CD14-positive monocyte (primary cell): ENCODE measurements at regions of chr20 and their contacts with region 1.

Region 1: DNA sequence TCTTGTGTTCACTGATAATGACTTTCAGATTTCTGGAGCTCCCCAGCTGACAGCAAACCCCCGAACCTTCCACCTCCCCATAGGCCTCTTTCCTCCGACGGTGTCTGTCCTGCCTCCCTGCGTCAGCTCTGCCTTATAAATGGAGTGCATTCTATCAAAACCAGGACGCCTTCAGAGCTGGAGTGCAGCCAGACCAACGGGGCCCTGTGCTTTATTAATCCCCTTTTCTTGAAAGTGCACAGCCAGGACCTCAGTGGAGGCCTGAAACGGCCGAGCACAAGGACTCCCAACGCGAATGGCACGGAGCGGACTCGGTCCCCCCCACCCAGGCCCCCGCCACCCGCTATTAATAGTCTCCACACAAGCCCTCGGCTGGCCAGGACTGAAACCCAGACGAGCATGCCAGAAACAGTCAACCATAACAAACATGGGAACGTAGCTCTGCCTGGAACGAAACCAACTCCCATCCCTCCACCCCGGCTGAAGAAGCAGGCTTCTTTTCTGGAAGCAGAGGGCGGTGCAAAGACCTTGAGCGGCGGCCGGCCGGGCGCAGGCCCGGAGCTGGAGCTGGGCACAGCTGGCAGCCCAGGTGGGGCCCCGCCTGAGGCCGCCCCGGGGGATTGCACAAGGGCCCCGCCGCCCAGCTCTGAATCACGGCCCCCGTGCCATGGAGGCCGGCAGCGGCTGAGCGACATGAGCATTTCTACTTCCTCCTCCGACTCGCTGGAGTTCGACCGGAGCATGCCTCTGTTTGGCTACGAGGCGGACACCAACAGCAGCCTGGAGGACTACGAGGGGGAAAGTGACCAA is 42.3 kb upstream of the NAA20 start:
- DNase-seq: peak; percentile 89 to 94 (median 93)
- H3K4me3 ChIP-seq: peak overlapping the region; percentile 14 to 69 (median 55)
- H3K4me3 Mint-ChIP-seq: peak overlapping the region; percentile 76 to 83
- H3K27ac ChIP-seq: peak overlapping the region; percentile 85 to 89
- H3K27ac Mint-ChIP-seq: peak overlapping the region; percentile 86 to 97 (median 94)
- H3K4me1 ChIP-seq: peaks cover 84 to 93% of the 10 kb centered on the region in 2 donors
- H3K4me1 Mint-ChIP-seq: peaks cover 93% of the 10 kb centered on the region
- H3K27me3 ChIP-seq: no peaks in the 10 kb centered on the region
- H3K27me3 Mint-ChIP-seq: peaks cover 0 to 1% (median under 1%) of the 10 kb centered on the region in 3 donors
- CTCF ChIP-seq: no peak

Region 2: DNA sequence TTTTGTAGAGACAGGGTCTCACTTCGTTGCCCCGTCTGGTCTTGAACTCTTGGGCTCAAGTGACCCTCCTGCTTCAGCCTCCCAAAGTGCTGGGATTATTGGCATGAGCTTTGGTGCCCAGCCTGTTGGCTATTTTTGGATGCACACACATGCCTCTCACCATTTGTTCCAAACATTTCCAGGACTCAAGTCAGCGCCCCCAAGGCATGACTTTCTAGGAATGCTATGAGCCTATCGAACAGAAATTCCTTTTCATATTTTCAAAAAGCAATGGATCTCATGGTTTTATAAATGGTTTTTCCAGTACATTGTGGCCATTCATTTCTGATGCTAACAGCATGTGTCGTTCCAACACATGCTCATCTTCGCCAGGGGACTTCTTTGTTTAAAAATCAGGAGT is 76.9 kb before region 1 on chr20:
- intact Hi-C with region 1: no loop called
- DNase-seq: no peak
- H3K4me3 ChIP-seq: no peak overlapping the region
- H3K4me3 Mint-ChIP-seq: no peak overlapping the region
- H3K27ac ChIP-seq: no peak overlapping the region
- H3K27ac Mint-ChIP-seq: no peak overlapping the region
- H3K4me1 ChIP-seq: peaks cover 16 to 17% of the 10 kb centered on the region in 2 donors
- H3K4me1 Mint-ChIP-seq: peaks cover 17% of the 10 kb centered on the region
- H3K27me3 ChIP-seq: no peaks in the 10 kb centered on the region
- H3K27me3 Mint-ChIP-seq: peaks cover 0 to 5% (median 0%) of the 10 kb centered on the region in 3 donors
- CTCF ChIP-seq: no peak

Region 3: DNA sequence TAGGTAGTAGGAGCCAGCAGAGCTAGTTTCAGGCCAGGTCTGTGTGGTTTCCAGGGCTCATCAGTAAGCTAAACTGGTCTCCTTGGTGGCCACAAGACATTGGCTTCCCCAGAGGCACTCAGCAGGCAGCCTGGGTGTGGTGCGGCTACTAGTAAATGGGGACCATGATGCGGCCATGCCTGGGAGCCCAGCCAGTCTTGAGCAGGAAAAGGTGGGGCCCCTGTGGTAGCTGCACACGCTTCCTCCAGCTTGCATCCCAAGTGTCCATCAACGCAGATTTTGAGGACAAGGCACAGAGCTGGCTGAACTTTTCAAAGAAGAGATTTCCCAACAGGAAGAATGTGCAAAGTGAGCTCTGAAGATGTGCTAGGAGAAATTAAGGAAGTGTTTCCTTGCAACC is 65.1 kb before region 1 on chr20:
- intact Hi-C with region 1: loop called in 1 of 2 experiments (anchors 5 kb)
- DNase-seq: peak in 2 of 3 donors; percentile 57 to 61
- H3K4me3 ChIP-seq: peak overlapping the region in 1 of 3 experiments; percentile 42
- H3K4me3 Mint-ChIP-seq: peak overlapping the region; percentile 34 to 67
- H3K27ac ChIP-seq: peak overlapping the region; percentile 73 to 74
- H3K27ac Mint-ChIP-seq: peak overlapping the region; percentile 81 to 90 (median 88)
- H3K4me1 ChIP-seq: peaks cover 75 to 77% of the 10 kb centered on the region in 2 donors
- H3K4me1 Mint-ChIP-seq: peaks cover 76% of the 10 kb centered on the region
- H3K27me3 ChIP-seq: no peaks in the 10 kb centered on the region
- H3K27me3 Mint-ChIP-seq: peaks cover 0 to 4% (median 4%) of the 10 kb centered on the region in 3 donors
- CTCF ChIP-seq: no peak